Activated CD8-positive, alpha-beta T cell treated with anti-CD3 and anti-CD28 coated beads for 36 hours (primary cell): ENCODE measurements at regions of chr19 and their contacts with region 1.

Region 1: GRCh38 chr19:12945479-12946091 is at the start of gene RAD23A:
- DNase-seq: peak; percentile 99
- ATAC-seq: peak; percentile 87
- H3K4me3 Mint-ChIP-seq: peak within 1 kb of the TSS; percentile 85
- H3K27ac Mint-ChIP-seq: peak within 1 kb of the TSS; percentile 96
- H3K4me1 Mint-ChIP-seq: peaks cover 44% of the 10 kb centered on the region
- H3K27me3 Mint-ChIP-seq: no peaks in the 10 kb centered on the region
- CTCF ChIP-seq: no peak
- total RNA-seq, gene RAD23A: 189 to 190 TPM

Region 2: GRCh38 chr19:12716861-12717260 is 228.7 kb before region 1 on chr19:
- CTCF ChIA-PET with region 1: no interaction called
- POLR2A ChIA-PET with region 1: no interaction called
- intact Hi-C with region 1: no loop called
- DNase-seq: peak; percentile 49
- ATAC-seq: peak; percentile 67
- H3K4me3 Mint-ChIP-seq: no peak overlapping the region
- H3K27ac Mint-ChIP-seq: peak overlapping the region; percentile 20
- H3K4me1 Mint-ChIP-seq: peaks cover 23% of the 10 kb centered on the region
- H3K27me3 Mint-ChIP-seq: no peaks in the 10 kb centered on the region
- CTCF ChIP-seq: peak; percentile 28

Region 3: DNA sequence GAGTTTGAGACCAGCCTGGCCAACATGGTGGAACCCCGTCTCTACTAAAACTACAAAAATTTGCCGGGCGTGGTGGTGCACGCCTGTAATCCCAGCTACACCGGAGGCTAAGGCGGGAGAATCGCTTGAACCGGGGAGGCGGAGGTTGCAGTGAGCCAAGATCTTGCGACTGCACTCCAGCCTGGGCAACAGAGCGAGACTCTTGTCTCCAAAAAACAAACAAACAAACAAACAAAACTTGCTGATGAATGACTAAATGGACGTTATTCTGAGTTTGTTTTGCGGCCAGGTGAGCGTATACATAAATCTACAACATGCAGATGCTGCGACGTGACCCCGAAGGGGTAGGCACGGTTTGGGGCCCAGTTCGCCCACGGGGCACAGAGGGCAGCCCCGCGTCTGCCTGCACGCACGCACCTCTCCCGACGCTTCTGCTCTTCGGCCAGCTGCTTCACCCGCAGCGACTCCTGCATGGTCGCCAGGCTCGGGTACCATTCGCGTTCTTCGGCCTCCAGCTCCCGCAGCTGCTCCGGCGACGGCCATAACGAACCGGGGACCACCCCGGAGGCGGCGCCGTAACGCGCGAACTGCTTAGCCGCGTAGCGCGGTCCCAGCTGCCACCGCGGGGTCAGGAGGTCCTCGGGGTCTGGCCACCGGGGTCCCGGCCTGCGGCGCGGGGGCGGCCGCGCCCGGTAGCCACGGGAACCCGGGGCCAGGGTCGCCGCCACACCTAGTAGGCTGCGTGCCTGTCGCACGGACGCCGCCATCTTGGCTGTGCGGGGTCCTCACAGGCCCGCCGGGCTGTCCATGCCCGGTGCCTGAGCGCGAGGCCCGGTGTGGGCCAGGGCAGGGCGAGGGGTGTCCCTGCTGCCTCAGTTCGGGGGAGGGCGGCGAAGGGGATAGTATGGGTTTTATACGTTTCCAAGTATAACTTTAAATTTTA is 11.1 kb after region 1 on chr19 and contains the start of gene GADD45GIP1:
- CTCF ChIA-PET with region 1: no interaction called
- POLR2A ChIA-PET with region 1: interaction called, 30 read pairs
- intact Hi-C with region 1: no loop called
- DNase-seq: peak; percentile 87
- ATAC-seq: peak; percentile 96
- H3K4me3 Mint-ChIP-seq: peak within 1 kb of the TSS; percentile 78
- H3K27ac Mint-ChIP-seq: peak within 1 kb of the TSS; percentile 98
- H3K4me1 Mint-ChIP-seq: peaks cover 36% of the 10 kb centered on the region
- H3K27me3 Mint-ChIP-seq: no peaks in the 10 kb centered on the region
- CTCF ChIP-seq: no peak
- total RNA-seq, gene GADD45GIP1: 32.6 to 36.0 TPM

Region 4: GRCh38 chr19:13172068-13172896 is 226.7 kb after region 1 on chr19:
- CTCF ChIA-PET with region 1: no interaction called
- POLR2A ChIA-PET with region 1: no interaction called
- intact Hi-C with region 1: no loop called
- DNase-seq: peak; percentile 93
- ATAC-seq: peak; percentile 17
- H3K4me3 Mint-ChIP-seq: peak overlapping the region; percentile 90
- H3K27ac Mint-ChIP-seq: peak overlapping the region; percentile 98
- H3K4me1 Mint-ChIP-seq: peaks cover 52% of the 10 kb centered on the region
- H3K27me3 Mint-ChIP-seq: no peaks in the 10 kb centered on the region
- CTCF ChIP-seq: no peak